Activated naive CD4-positive, alpha-beta T cell treated with anti-CD3 and anti-CD28 coated beads for 36 hours (primary cell): ENCODE measurements at regions of chr22 and their contacts with region 1.

Region 1: GRCh38 chr22:40950962-40951794 is at the start of gene RBX1:
- DNase-seq: peak; percentile 99
- H3K4me3 Mint-ChIP-seq: peak within 1 kb of the TSS; percentile 93
- H3K27ac Mint-ChIP-seq: peak within 1 kb of the TSS; percentile 98
- H3K4me1 Mint-ChIP-seq: peaks cover 23% of the 10 kb centered on the region
- H3K27me3 Mint-ChIP-seq: no peaks in the 10 kb centered on the region
- total RNA-seq, gene RBX1: 90.1 to 93.3 TPM

Region 2: GRCh38 chr22:40443732-40444131 is 507.4 kb before region 1 on chr22:
- CTCF ChIA-PET with region 1: no interaction called
- intact Hi-C with region 1: no loop called
- DNase-seq: no peak
- H3K4me3 Mint-ChIP-seq: no peak overlapping the region
- H3K27ac Mint-ChIP-seq: no peak overlapping the region
- H3K4me1 Mint-ChIP-seq: peaks cover 67% of the 10 kb centered on the region
- H3K27me3 Mint-ChIP-seq: no peaks in the 10 kb centered on the region

Region 3: GRCh38 chr22:40856513-40857308 is 94.5 kb before region 1 on chr22 and contains the starts of genes ST13 and XPNPEP3:
- CTCF ChIA-PET with region 1: no interaction called
- intact Hi-C with region 1: loop called (anchors 1 kb)
- DNase-seq: peak; percentile 98
- H3K4me3 Mint-ChIP-seq: peak within 1 kb of the TSS; percentile 95
- H3K27ac Mint-ChIP-seq: peak within 1 kb of the TSS; percentile 99
- H3K4me1 Mint-ChIP-seq: peaks cover 51% of the 10 kb centered on the region
- H3K27me3 Mint-ChIP-seq: no peaks in the 10 kb centered on the region
- total RNA-seq, gene ST13: 240 to 254 TPM
- total RNA-seq, gene XPNPEP3: 15.7 to 19.6 TPM

Region 4: GRCh38 chr22:41070665-41071331 is 119.6 kb after region 1 on chr22:
- CTCF ChIA-PET with region 1: no interaction called
- intact Hi-C with region 1: no loop called
- DNase-seq: no peak
- H3K4me3 Mint-ChIP-seq: no peak overlapping the region
- H3K27ac Mint-ChIP-seq: no peak overlapping the region
- H3K4me1 Mint-ChIP-seq: peaks cover 10% of the 10 kb centered on the region
- H3K27me3 Mint-ChIP-seq: no peaks in the 10 kb centered on the region

Region 5: GRCh38 chr22:41204992-41205900 is 254.1 kb after region 1 on chr22 and contains the start of gene L3MBTL2:
- CTCF ChIA-PET with region 1: no interaction called
- intact Hi-C with region 1: loop called (anchors 1 kb)
- DNase-seq: peak; percentile 99
- H3K4me3 Mint-ChIP-seq: peak within 1 kb of the TSS; percentile 88
- H3K27ac Mint-ChIP-seq: peak within 1 kb of the TSS; percentile 86
- H3K4me1 Mint-ChIP-seq: peaks cover 33% of the 10 kb centered on the region
- H3K27me3 Mint-ChIP-seq: no peaks in the 10 kb centered on the region
- total RNA-seq, gene L3MBTL2: 19.4 to 22.3 TPM

Region 6: GRCh38 chr22:41381329-41382097 is 430.3 kb after region 1 on chr22 and contains the start of gene TEF:
- CTCF ChIA-PET with region 1: no interaction called
- intact Hi-C with region 1: loop called (anchors 1 kb)
- DNase-seq: peak; percentile 98
- H3K4me3 Mint-ChIP-seq: peak within 1 kb of the TSS; percentile 87
- H3K27ac Mint-ChIP-seq: peak within 1 kb of the TSS; percentile 95
- H3K4me1 Mint-ChIP-seq: peaks cover 13% of the 10 kb centered on the region
- H3K27me3 Mint-ChIP-seq: no peaks in the 10 kb centered on the region
- total RNA-seq, gene TEF: 1.7 to 1.9 TPM

Region 7: DNA sequence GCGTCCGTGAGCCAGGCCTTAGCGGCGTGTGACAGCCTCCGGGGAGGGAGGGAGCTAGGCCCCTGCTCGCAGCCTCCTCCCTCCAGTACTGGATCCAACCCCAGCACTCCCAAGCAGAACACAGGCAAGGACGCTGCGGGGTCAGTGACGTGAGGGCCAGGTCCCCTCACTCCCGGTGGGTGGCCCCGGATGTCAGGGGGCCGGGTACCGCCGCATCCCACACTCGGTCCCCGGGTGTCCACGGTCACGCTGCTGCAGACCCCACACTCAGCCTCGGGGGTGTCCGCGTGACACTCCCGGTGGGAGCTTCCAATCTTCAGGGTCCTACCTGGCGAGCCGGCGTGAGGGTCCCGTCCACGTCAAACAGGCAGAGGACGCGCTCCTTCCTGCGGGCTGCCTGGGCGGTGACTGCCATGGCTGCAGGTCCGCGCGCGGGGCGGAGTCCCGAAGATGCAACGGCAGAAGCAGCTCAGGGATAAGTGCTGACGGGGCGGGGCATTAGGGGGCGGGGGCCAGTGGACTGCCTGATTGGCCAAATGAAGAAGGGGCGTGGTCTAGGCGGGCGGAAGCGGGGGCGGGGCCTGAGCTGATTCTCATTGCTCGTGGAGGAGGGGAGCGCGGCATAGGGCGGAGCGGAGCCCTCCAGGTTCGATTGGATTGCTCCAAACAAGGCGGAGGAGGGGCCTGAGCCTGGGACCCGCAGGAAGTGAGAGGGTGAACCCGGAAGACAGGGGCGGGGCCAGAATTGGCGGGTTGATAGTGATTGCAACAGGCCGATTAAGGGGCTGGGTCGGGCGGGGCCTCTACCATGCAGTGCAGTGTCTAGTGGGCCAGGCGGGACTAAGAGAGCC is 638.4 kb after region 1 on chr22 and contains the start of gene PMM1:
- CTCF ChIA-PET with region 1: no interaction called
- intact Hi-C with region 1: loop called (anchors 1 kb)
- DNase-seq: peak; percentile 100
- H3K4me3 Mint-ChIP-seq: peak within 1 kb of the TSS; percentile 93
- H3K27ac Mint-ChIP-seq: peak within 1 kb of the TSS; percentile 84
- H3K4me1 Mint-ChIP-seq: peaks cover 12% of the 10 kb centered on the region
- H3K27me3 Mint-ChIP-seq: no peaks in the 10 kb centered on the region
- total RNA-seq, gene PMM1: 35.3 to 35.6 TPM